ENCODE measurements at regions of chr22 and their contacts with region 1.

Region 1: DNA sequence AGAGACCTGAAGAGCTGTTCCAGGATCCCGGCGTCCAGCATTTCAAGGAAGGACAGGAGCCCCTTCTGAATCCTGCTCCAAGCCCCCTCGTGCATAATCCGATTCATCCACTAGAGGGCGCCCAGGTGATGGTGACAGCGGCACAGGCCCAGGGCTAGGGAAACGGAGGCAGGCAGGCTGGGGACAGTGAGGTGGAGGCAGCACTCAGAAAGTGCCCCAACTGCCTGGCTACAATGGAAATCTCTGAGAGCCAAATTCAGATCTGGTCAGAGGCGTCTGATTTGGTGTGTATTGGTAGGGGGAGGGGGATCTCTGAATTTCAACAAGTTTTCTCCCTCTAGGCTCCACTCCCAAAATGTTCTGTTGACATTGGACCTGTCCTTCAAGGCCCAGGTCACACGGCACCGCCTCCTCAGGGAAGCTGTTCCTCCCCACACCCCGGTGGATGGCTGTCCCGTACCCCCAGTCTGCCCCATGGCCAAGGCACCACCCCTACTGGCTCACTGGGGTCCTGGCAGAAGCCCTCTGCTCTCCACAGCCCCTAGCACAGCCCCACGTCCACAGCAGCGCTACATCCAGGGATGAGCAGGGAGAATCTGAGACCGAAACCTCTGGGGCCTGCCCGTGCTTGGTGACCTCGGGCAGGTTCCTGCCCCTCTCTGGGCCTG is 142.9 kb downstream of the CRYBB2 start:
- DNase-seq: no peak
- H3K4me3 ChIP-seq: no peak overlapping the region
- H3K27ac ChIP-seq: no peak overlapping the region
- H3K4me1 ChIP-seq: peaks cover 0 to 46% (median 11%) of the 10 kb centered on the region in 3 donors
- H3K27me3 ChIP-seq: no peaks in the 10 kb centered on the region
- CTCF ChIP-seq: peak; percentile 48 to 82 (median 73)
- POLR2A ChIP-seq: no peak

Region 2: DNA sequence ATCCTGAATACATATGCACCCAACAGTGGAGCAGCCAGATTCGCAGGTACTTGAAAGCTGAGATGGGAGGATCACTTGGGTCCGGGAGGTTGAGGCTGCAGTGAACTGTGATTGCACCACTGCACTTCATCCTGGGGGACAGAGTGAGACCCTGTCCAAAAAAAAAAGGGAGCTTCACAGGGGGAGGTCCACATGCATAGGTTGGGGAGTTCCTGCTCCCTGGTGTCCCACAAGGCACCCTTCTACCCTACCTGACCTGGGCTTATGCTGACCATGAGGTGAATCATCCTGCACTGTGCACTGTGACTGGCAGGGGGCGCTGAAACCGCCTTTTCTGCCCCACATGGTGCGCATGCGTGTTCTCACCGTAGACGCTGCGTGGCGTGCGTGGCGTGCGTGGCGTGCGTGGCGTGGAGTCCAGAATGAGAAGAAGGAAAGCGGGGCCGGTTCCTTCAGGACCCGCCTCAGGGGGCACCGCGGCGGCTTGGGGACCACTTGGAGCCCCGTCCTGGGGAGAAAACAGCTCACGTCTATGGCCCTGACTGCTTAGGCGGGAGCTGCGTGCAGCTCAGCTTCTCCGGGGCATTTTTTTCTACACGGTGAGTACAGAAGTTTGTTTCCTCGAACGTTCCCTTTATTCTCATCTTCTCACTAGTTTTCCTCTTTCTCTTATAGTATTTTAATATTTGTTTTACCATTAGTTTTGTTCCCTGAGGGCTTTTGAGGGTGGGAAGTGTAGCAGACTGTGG is 85.5 kb after region 1 on chr22:
- intact Hi-C with region 1: loop called (anchors 10 kb)
- DNase-seq: peak; percentile 42
- H3K4me3 ChIP-seq: peak overlapping the region; percentile 55 to 72 (median 68)
- H3K27ac ChIP-seq: peak overlapping the region; percentile 50 to 85 (median 82)
- H3K4me1 ChIP-seq: peaks cover 6 to 50% (median 18%) of the 10 kb centered on the region in 3 donors
- H3K27me3 ChIP-seq: no peaks in the 10 kb centered on the region
- CTCF ChIP-seq: peak; percentile 83 to 95 (median 88)
- POLR2A ChIP-seq: peak in 1 of 4 donors; percentile 30

Measured in esophagus squamous epithelium (tissue), 5 donors.